ENCODE measurements at regions of chr4 and their contacts with region 1.

Region 1: DNA sequence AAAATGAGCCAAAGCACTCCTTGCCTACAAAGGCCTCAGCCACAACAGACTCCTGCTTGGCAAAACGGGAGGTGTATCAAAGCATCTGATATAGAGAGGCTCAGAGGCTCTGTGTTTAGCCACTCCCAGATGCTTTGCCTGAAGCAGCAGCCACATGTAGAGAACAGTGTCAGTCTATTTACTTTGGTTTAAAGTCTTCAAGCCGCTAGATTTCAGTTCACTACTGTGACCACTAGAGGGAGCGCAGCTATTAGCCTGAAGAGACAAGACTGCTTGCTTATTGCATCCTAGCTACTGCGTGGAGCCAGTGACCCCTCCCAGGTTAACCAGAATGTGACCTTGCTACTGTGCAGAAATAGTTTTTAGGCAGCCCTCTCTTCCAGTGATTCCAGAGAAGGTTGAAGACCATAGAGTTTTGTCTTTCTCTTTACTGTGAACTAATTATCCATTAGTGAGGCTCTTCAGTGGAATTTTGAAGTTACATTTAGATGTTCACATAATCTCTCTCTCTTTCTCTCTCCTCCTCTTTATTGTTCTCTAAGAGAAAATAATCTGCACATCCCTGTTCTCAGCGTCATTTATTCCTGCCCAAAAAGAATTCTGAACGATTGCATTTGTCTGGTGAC is 39.3 kb downstream of the BMP3 start:
- DNase-seq: peak; percentile 56
- H3K4me3 ChIP-seq: no peak overlapping the region
- CTCF ChIP-seq: peak; percentile 90

Region 2: DNA sequence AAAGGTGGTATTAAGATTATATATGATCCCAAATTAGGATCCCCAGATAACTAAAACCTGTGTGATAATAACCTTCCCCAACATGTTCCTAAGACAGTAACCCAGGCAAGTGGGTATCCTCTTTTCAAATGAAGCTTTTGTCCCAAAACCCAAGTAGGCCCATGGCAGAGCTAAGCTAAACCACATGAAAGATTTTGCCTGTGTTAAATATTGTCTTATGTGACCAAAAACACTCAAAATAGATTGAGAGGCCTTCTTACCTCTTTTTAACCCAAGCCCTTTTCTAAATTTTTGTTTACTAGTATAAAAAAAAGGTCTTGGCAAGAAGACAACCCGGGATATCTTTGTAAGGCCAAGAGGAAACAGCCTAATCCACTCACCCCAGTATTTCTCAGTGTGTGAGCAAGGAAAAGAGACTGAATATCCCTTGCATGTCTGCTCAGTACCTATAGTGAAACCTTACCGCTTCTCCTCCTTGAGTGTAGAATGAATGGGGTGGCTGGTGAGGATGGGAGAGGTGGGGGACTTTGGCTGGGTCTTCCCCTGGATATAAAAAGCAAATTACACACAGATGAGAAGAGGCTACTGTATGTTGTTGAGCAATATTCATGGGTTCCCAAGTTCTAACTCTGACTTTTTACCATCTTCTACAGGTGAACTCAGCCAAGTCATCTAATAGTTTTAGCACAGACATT is 228.1 kb before region 1 on chr4:
- CTCF ChIA-PET with region 1: no interaction called
- POLR2A ChIA-PET with region 1: no interaction called
- DNase-seq: no peak
- H3K4me3 ChIP-seq: no peak overlapping the region
- CTCF ChIP-seq: no peak

Region 3: DNA sequence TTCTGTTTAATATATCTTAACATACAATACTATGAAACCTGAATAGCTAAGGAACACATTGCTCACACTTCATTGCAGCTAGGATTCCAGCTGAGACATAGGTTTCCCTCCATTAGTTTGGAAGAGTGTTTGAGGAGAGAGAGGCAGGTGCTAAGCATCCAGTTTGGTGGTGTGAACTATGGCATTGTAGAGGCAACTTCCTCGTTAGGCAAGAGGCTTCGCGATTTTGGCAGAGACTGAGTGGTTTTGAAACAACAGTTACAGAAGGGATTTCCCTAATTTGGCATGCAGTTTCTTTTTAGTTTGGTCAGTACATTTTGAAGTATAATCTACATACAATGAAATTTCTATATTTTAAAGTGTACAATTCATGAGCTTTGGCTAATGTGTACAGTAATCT is 156.4 kb before region 1 on chr4:
- CTCF ChIA-PET with region 1: no interaction called
- POLR2A ChIA-PET with region 1: no interaction called
- DNase-seq: no peak
- H3K4me3 ChIP-seq: no peak overlapping the region
- CTCF ChIP-seq: no peak

Region 4: DNA sequence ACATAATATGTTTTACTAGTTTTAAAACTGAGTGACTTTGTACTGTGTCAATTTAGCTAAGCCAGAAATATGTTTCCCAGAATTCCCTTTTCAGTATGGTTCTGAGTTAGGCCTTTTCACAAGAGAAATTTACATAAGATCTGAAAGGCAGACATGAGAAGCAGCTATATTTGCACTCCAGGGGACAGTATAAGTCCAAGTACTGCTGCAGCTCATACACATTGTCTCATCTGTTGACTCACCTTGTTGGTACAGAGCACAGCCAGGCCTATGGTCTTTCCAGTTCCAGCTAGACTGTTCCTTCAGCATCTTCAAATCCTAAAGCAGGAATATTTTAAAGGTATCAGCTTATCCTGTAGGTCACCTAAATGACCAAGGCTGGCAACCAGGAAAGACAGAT is 14.2 kb after region 1 on chr4:
- CTCF ChIA-PET with region 1: interaction called, 10 read pairs
- POLR2A ChIA-PET with region 1: no interaction called
- DNase-seq: no peak
- H3K4me3 ChIP-seq: no peak overlapping the region
- CTCF ChIP-seq: peak; percentile 6

Region 5: DNA sequence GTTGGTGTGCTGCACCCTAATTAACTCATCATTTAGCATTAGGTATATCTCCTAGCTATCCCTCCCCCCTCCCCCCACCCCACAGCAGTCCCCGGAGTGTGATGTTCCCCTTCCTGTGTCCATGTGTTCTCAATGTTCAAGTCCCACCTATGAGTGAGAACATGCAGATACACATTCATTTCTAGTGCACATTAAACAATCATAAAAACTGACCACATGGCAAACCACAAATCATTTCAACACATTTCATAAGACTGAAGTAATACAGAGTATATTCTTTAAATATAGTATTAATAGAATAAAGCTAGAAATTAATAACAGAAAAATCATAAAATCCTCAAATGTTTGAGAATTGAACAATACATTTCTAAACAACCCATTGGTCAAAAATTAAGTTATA is 111.1 kb after region 1 on chr4:
- CTCF ChIA-PET with region 1: no interaction called
- POLR2A ChIA-PET with region 1: no interaction called
- DNase-seq: no peak
- H3K4me3 ChIP-seq: no peak overlapping the region
- CTCF ChIP-seq: no peak

Region 6: DNA sequence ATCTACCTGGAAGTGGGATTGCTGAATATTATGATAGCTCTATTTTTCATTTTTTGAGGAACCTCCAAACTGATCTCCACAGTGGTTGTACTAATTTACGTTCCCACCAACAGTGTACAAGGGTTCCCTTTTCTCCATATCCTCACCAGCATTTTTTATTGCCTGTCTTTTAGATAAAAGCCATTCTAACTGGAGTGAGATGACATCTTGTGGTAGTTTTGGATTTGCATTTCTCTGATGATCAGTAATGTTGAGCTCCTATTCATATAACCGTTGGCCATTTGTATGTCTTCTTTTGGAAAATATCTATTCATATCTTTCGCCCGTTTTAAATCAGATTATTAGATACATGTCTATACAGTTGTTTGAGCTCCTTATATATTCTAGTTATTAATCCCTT is 300.1 kb after region 1 on chr4:
- CTCF ChIA-PET with region 1: interaction called, 23 read pairs
- POLR2A ChIA-PET with region 1: no interaction called
- DNase-seq: no peak
- H3K4me3 ChIP-seq: no peak overlapping the region
- CTCF ChIP-seq: no peak